ENCODE measurements at regions of chr7 and their contacts with region 1.

Region 1: GRCh38 chr7:150695654-150696053 is 10.1 kb downstream of the GIMAP2 start:
- DNase-seq: no peak
- ATAC-seq: no peak
- H3K4me3 ChIP-seq: no peak overlapping the region
- H3K27ac ChIP-seq: no peak overlapping the region
- H3K4me1 ChIP-seq: no peaks in the 10 kb centered on the region
- H3K27me3 ChIP-seq: no peaks in the 10 kb centered on the region
- CTCF ChIP-seq: no peak
- POLR2A ChIP-seq: no peak

Region 2: DNA sequence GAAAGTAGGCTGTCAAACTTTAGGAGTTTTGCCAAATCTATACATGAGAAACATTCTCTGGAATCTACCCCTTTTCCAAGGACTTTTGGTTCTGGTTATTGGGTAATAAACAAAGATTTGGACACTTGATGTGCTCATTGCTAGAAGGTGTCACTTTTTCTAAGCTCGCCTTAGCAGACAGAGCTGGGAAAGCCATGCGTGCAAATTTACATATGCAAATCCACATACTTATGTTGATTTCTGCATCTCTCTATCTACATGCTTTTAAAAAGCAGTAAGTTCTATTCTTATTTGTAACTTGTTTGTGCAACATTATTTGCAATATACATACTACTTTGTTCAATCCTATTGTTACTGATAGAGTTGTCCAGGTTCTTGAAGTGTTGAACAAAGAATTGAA is 41.0 kb before region 1 on chr7:
- in situ Hi-C with region 1: no loop called
- intact Hi-C with region 1: loop called (anchors 2 kb)
- DNase-seq: no peak
- ATAC-seq: no peak
- H3K4me3 ChIP-seq: no peak overlapping the region
- H3K27ac ChIP-seq: no peak overlapping the region
- H3K4me1 ChIP-seq: no peaks in the 10 kb centered on the region
- H3K27me3 ChIP-seq: no peaks in the 10 kb centered on the region
- CTCF ChIP-seq: no peak
- POLR2A ChIP-seq: no peak

Region 3: GRCh38 chr7:151206914-151207313 is 511.3 kb after region 1 on chr7:
- in situ Hi-C with region 1: no loop called
- intact Hi-C with region 1: no loop called
- DNase-seq: no peak
- ATAC-seq: no peak
- H3K4me3 ChIP-seq: no peak overlapping the region
- H3K27ac ChIP-seq: no peak overlapping the region
- H3K4me1 ChIP-seq: no peaks in the 10 kb centered on the region
- H3K27me3 ChIP-seq: peaks cover 7 to 26% (median 17%) of the 10 kb centered on the region in 3 donors
- CTCF ChIP-seq: no peak
- POLR2A ChIP-seq: no peak